MCF 10A (cell line): ENCODE measurements at regions of chr1 and their contacts with region 1.

Region 1: GRCh38 chr1:180515864-180516388 is 13.5 kb upstream of the ACBD6 start:
- DNase-seq: peak; percentile 95
- H3K4me3 Mint-ChIP-seq: no peak overlapping the region
- H3K27ac Mint-ChIP-seq: peak overlapping the region; percentile 91
- H3K4me1 Mint-ChIP-seq: peaks cover 7% of the 10 kb centered on the region
- H3K27me3 Mint-ChIP-seq: no peaks in the 10 kb centered on the region
- CTCF ChIP-seq: peak; percentile 98

Region 2: DNA sequence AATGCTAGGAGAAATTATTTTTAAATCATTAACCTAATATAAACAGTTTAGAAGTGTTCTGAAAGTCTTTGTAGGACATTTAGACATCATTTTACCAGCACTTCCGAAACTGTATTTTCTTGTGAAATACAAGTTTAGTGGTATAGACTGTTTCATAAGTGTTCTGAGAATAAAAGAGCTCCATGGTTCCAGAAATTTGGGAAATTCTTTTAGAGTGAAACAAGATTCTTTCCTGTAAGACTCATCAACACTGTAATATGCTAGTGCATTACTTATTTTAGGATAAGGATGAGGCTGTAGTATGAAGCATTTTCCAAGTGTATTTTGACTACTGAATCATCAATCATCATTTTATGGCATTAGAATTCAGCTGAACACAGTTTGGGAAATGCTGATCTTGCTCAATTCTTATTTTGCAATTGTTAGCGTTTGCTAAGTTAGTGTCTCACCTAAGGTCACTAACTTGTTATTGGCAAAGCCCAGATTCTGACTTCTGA is 487.9 kb before region 1 on chr1:
- CTCF ChIA-PET with region 1: no interaction called
- POLR2A ChIA-PET with region 1: no interaction called
- intact Hi-C with region 1: no loop called
- DNase-seq: peak; percentile 90
- H3K4me3 Mint-ChIP-seq: no peak overlapping the region
- H3K27ac Mint-ChIP-seq: peak overlapping the region; percentile 69
- H3K4me1 Mint-ChIP-seq: peaks cover 22% of the 10 kb centered on the region
- H3K27me3 Mint-ChIP-seq: no peaks in the 10 kb centered on the region
- CTCF ChIP-seq: no peak

Region 3: DNA sequence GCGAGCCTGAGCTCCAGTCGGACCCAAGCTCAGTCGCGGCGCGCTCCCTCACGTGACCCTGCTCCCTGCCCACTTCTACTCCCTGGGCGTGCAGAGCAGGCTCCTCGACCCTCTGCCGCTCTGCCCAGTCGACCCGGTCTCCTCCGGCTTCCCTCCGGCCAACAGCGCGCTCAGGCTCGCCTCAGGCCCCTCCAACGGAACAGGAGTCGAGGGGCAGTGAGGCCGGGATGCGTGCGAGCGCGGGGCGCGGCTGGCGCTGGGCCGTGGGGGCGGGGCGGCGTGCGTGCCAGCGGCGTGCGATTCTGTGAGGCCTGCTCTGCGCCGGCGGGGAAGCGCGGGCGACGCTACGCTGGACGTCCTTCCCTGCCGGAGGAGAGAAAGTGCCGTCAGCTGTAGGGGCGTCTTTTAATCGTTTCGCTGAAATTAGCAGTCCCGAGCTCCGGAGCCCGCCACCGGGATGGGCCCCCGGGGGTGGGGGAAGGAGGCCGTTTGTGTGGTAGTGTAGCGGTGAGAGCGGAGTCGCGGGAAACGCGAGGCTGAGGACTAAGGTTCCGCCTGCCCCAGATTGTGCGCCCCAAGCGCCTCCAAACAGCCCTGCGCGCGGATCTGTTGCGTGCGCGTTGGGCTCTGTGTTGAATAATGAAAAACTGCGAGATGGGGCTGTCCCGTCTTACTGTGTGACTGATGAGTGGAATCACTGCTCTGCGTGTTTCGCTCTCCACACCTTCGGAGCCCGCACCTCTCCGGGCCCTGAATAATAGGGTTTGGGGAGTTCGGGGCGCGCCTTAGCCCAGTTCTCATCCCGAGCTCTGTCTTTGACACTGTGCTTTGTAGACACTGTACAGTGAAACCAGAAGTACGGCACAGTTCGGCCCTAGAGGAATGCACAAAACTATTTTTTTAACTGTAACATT is 13.3 kb before region 1 on chr1 and contains the start of gene ACBD6:
- CTCF ChIA-PET with region 1: interaction called, 86 read pairs
- POLR2A ChIA-PET with region 1: interaction called, 151 read pairs
- intact Hi-C with region 1: no loop called
- DNase-seq: peak; percentile 94
- H3K4me3 Mint-ChIP-seq: peak within 1 kb of the TSS; percentile 94
- H3K27ac Mint-ChIP-seq: peak within 1 kb of the TSS; percentile 97
- H3K4me1 Mint-ChIP-seq: peaks cover 29% of the 10 kb centered on the region
- H3K27me3 Mint-ChIP-seq: no peaks in the 10 kb centered on the region
- CTCF ChIP-seq: no peak
- total RNA-seq, gene ACBD6: 123 and 136 TPM in 2 replicates

Region 4: GRCh38 chr1:180533266-180533987 is 17.5 kb after region 1 on chr1:
- CTCF ChIA-PET with region 1: interaction called, 77 read pairs
- POLR2A ChIA-PET with region 1: interaction called, 56 read pairs
- intact Hi-C with region 1: loop called (anchors 2 kb)
- DNase-seq: peak; percentile 88
- H3K4me3 Mint-ChIP-seq: no peak overlapping the region
- H3K27ac Mint-ChIP-seq: no peak overlapping the region
- H3K4me1 Mint-ChIP-seq: peaks cover 43% of the 10 kb centered on the region
- H3K27me3 Mint-ChIP-seq: no peaks in the 10 kb centered on the region
- CTCF ChIP-seq: peak; percentile 90

Region 5: GRCh38 chr1:180691301-180691913 is 175.5 kb after region 1 on chr1:
- CTCF ChIA-PET with region 1: no interaction called
- POLR2A ChIA-PET with region 1: no interaction called
- intact Hi-C with region 1: no loop called
- DNase-seq: no peak
- H3K4me3 Mint-ChIP-seq: no peak overlapping the region
- H3K27ac Mint-ChIP-seq: no peak overlapping the region
- H3K4me1 Mint-ChIP-seq: no peaks in the 10 kb centered on the region
- H3K27me3 Mint-ChIP-seq: no peaks in the 10 kb centered on the region
- CTCF ChIP-seq: no peak

Region 6: DNA sequence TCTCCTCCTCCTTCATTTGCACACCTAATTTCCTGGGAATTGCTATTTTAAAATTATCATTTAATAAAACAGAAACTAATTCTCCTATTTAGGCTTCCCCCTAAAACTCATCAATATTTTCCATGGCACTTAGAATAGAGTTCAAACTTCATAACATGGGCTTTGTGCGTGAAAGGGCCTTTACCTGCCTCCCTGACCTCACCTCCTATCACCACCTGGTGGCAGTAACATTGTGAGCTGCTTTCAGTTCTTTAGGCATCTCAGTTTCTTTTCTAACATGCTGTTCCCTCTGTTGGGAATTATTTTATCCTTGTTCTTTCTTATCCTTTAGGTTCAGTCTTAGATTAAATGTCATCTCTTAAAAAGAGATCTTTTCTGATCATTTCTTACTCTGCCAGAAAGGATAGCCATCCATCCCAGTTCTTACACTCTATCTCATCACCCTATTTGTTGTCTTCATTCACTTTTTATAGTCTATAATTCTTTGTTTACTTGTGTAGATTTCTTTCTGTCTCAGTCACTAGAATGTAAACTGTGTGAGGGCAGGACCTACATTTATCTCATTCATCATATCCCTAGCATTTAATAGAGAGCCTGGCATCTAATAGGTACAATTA is 263.0 kb after region 1 on chr1:
- CTCF ChIA-PET with region 1: interaction called, 3 read pairs
- POLR2A ChIA-PET with region 1: interaction called, 5 read pairs
- intact Hi-C with region 1: loop called (anchors 2 kb)
- DNase-seq: peak; percentile 59
- H3K4me3 Mint-ChIP-seq: no peak overlapping the region
- H3K27ac Mint-ChIP-seq: no peak overlapping the region
- H3K4me1 Mint-ChIP-seq: peaks cover 9% of the 10 kb centered on the region
- H3K27me3 Mint-ChIP-seq: no peaks in the 10 kb centered on the region
- CTCF ChIP-seq: peak; percentile 57

Region 7: GRCh38 chr1:181166377-181167196 is 650.7 kb after region 1 on chr1:
- CTCF ChIA-PET with region 1: interaction called, 7 read pairs
- POLR2A ChIA-PET with region 1: interaction called, 4 read pairs
- intact Hi-C with region 1: loop called (anchors 1 kb)
- DNase-seq: peak; percentile 90
- H3K4me3 Mint-ChIP-seq: no peak overlapping the region
- H3K27ac Mint-ChIP-seq: no peak overlapping the region
- H3K4me1 Mint-ChIP-seq: no peaks in the 10 kb centered on the region
- H3K27me3 Mint-ChIP-seq: no peaks in the 10 kb centered on the region
- CTCF ChIP-seq: peak; percentile 97